Activated B cell treated with CpG ODN at 0.5 μM for 24 hours (primary cell): ENCODE measurements at regions of chr9 and their contacts with region 1.

Region 1: DNA sequence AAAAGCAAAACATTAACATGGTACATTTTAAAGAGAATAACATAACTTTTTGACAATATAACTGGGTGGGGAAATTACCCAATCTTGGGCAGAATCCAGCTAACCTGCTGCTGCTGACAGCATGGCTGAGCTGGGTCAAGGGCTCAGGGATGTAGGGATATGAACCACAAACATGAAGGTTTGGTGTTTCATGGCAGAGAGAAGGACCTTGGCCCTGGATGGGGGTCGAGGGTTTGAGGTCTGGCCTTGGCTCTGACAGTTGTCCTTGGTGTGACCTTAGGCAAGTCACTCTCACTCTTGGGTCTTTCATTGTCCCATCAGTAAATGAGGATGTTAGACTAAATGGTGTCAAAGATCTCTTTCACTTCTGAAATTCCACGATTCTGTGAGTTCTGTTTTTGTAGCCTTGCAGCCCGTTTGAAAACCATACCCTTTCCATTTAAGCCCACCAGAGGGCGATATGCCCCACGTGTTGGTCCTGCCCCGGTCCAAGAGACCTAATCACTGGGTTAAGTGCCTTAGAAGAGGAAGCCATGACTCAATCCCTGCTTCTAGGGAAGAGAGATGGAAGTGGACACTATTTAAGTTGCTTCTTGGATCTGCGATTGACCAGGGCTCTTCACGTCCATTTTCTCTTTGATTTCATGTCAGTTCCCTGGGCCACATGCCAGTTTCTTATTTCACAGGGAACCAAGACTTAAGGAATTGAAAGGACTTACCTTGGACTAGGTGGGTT is 56.8 kb upstream of the TEX48 start:
- DNase-seq: peak; percentile 36
- ATAC-seq: peak; percentile 89
- H3K4me3 Mint-ChIP-seq: no peak overlapping the region
- H3K27ac Mint-ChIP-seq: peak overlapping the region; percentile 46
- H3K4me1 Mint-ChIP-seq: peaks cover 14% of the 10 kb centered on the region
- H3K27me3 Mint-ChIP-seq: peaks cover 3% of the 10 kb centered on the region
- CTCF ChIP-seq: peak; percentile 64

Region 2: DNA sequence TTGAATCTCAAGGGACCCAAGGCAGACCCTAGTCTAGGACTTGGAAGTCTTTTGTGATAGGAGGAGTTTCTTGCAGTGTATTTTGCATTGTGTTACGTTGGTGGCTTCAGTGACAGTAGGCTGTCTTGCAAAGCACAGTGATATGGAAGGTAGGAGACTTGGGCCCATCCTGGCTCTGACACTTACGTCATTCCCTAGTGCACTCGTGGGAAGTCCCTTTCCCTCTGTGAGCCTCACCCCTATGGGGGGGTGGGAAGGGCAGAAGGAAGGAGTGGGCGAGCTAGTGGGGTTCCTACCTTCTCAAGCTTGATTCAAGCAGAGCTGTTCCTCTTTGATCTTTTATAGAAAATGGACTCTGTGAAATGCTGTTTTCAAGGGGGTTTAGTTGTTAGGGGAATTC is 71.9 kb before region 1 on chr9:
- CTCF ChIA-PET with region 1: no interaction called
- POLR2A ChIA-PET with region 1: no interaction called
- intact Hi-C with region 1: no loop called
- DNase-seq: no peak
- ATAC-seq: no peak
- H3K4me3 Mint-ChIP-seq: no peak overlapping the region
- H3K27ac Mint-ChIP-seq: no peak overlapping the region
- H3K4me1 Mint-ChIP-seq: peaks cover 6% of the 10 kb centered on the region
- H3K27me3 Mint-ChIP-seq: peaks cover 3% of the 10 kb centered on the region
- CTCF ChIP-seq: no peak

Region 3: GRCh38 chr9:114681594-114682332 is 57.0 kb before region 1 on chr9 and contains the start of gene TEX48:
- CTCF ChIA-PET with region 1: interaction called, 12 read pairs
- POLR2A ChIA-PET with region 1: no interaction called
- intact Hi-C with region 1: loop called (anchors 1 kb)
- DNase-seq: no peak
- ATAC-seq: peak; percentile 94
- H3K4me3 Mint-ChIP-seq: no peak within 1 kb of the TSS
- H3K27ac Mint-ChIP-seq: peak within 1 kb of the TSS; percentile 36
- H3K4me1 Mint-ChIP-seq: peaks cover 5% of the 10 kb centered on the region
- H3K27me3 Mint-ChIP-seq: peaks cover 24% of the 10 kb centered on the region
- CTCF ChIP-seq: no peak
- total RNA-seq, gene TEX48: not detected in 2 replicates

Region 4: DNA sequence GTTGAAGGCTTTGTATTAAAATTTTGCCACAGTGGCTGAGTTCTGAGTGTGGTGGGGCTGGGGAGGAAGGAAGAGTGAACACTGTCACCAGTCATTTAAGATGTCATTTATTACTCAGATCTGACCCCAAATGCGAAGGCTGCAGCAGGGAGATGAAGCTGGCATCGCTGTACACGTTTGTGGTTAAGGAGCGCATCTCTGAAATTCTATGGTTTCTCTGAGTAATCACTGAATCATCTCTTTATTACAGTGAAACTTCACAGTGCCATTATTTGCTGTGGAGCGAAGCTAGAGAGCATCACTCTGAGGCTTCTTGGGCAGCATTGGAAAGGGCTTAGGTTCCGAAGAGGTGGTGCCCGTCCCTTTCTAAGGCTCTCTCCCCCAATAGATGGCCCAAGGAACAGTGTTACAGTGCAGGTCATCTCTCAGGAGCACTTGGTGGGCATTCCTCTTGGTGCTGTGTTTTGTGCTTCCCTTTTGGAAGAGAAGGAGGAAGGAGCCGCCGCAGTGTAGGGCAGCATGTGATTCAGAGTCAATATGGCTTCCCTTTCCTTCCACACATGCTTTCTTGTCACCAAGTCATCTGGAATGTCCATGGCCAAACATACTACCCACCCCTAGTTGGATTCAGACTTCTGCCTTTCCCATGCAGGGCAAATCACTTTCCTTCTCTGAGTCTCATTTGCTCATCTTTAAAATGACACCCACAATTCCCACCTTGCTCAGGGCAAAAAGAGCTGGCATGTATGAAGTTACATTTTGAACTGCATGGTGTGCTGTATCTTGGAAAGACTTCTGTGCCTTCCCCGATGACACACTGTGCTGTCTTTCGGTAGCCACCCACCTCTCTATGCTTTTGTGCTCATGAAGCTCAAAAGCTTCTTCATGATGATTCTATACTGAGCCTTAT is 47.4 kb before region 1 on chr9:
- CTCF ChIA-PET with region 1: no interaction called
- POLR2A ChIA-PET with region 1: no interaction called
- intact Hi-C with region 1: loop called (anchors 2 kb)
- DNase-seq: no peak
- ATAC-seq: peak; percentile 84
- H3K4me3 Mint-ChIP-seq: no peak overlapping the region
- H3K27ac Mint-ChIP-seq: peak overlapping the region; percentile 14
- H3K4me1 Mint-ChIP-seq: peaks cover 9% of the 10 kb centered on the region
- H3K27me3 Mint-ChIP-seq: peaks cover 17% of the 10 kb centered on the region
- CTCF ChIP-seq: no peak

Region 5: DNA sequence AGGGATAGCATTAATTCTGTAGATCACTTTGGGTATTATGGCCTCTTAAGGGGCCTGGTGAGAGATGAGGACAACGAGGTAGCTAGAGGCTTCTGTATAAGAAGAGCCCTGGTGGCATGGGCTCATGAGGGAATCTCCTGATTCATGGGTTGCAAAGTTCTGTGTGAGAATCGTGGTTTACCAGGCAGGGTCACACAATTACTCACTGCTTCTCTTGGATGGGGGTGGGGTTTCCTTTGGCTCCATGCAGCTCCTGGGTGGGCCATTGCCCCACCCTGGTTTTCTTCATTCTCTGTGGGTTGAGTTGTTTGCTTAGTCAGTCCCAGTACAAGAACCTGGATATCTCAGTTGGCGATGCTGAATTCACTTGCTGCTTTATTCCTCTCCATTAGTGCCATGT is 98.0 kb after region 1 on chr9:
- CTCF ChIA-PET with region 1: no interaction called
- POLR2A ChIA-PET with region 1: no interaction called
- intact Hi-C with region 1: no loop called
- DNase-seq: no peak
- ATAC-seq: no peak
- H3K4me3 Mint-ChIP-seq: no peak overlapping the region
- H3K27ac Mint-ChIP-seq: no peak overlapping the region
- H3K4me1 Mint-ChIP-seq: no peaks in the 10 kb centered on the region
- H3K27me3 Mint-ChIP-seq: peaks cover 33% of the 10 kb centered on the region
- CTCF ChIP-seq: no peak

Region 6: GRCh38 chr9:115524453-115525059 is 785.8 kb after region 1 on chr9:
- CTCF ChIA-PET with region 1: interaction called, 4 read pairs
- POLR2A ChIA-PET with region 1: no interaction called
- intact Hi-C with region 1: loop called (anchors 1 kb)
- DNase-seq: no peak
- ATAC-seq: peak; percentile 34
- H3K4me3 Mint-ChIP-seq: no peak overlapping the region
- H3K27ac Mint-ChIP-seq: no peak overlapping the region
- H3K4me1 Mint-ChIP-seq: no peaks in the 10 kb centered on the region
- H3K27me3 Mint-ChIP-seq: peaks cover 5% of the 10 kb centered on the region
- CTCF ChIP-seq: no peak

Region 7: DNA sequence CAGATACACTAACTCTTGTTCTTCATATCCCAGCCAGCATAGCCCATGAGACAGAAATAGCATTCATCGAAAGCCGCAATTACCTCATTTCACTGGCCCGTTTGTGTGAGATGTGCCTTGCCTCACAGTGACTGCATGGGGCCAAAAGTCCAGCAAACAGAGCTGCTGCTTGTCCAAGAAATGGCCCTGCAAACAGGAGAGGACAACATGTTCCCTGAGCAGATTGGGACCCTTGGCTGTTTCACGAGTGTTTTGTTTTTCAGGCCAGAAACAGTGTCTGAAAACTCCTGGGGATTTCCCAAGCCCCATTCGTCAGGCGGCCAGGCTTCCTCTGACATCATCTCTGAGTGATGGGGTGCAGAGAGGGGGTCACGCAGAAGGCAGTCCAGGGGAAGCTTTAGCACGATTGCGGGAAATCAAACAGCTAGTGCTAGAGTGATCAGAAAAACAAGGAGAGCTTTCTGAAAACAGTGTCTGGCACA is 911.3 kb after region 1 on chr9:
- CTCF ChIA-PET with region 1: no interaction called
- POLR2A ChIA-PET with region 1: no interaction called
- intact Hi-C with region 1: no loop called
- DNase-seq: no peak
- ATAC-seq: no peak
- H3K4me3 Mint-ChIP-seq: no peak overlapping the region
- H3K27ac Mint-ChIP-seq: no peak overlapping the region
- H3K4me1 Mint-ChIP-seq: no peaks in the 10 kb centered on the region
- H3K27me3 Mint-ChIP-seq: peaks cover 3% of the 10 kb centered on the region
- CTCF ChIP-seq: no peak

Region 8: GRCh38 chr9:116661037-116661954 is 1922.5 kb after region 1 on chr9:
- CTCF ChIA-PET with region 1: no interaction called
- POLR2A ChIA-PET with region 1: no interaction called
- intact Hi-C with region 1: loop called (anchors 2 kb)
- DNase-seq: no peak
- ATAC-seq: peak; percentile 49
- H3K4me3 Mint-ChIP-seq: no peak overlapping the region
- H3K27ac Mint-ChIP-seq: no peak overlapping the region
- H3K4me1 Mint-ChIP-seq: no peaks in the 10 kb centered on the region
- H3K27me3 Mint-ChIP-seq: no peaks in the 10 kb centered on the region
- CTCF ChIP-seq: no peak